Ascending aorta (tissue), 2 donors: ENCODE measurements at regions of chr2 and their contacts with region 1.

Region 1: DNA sequence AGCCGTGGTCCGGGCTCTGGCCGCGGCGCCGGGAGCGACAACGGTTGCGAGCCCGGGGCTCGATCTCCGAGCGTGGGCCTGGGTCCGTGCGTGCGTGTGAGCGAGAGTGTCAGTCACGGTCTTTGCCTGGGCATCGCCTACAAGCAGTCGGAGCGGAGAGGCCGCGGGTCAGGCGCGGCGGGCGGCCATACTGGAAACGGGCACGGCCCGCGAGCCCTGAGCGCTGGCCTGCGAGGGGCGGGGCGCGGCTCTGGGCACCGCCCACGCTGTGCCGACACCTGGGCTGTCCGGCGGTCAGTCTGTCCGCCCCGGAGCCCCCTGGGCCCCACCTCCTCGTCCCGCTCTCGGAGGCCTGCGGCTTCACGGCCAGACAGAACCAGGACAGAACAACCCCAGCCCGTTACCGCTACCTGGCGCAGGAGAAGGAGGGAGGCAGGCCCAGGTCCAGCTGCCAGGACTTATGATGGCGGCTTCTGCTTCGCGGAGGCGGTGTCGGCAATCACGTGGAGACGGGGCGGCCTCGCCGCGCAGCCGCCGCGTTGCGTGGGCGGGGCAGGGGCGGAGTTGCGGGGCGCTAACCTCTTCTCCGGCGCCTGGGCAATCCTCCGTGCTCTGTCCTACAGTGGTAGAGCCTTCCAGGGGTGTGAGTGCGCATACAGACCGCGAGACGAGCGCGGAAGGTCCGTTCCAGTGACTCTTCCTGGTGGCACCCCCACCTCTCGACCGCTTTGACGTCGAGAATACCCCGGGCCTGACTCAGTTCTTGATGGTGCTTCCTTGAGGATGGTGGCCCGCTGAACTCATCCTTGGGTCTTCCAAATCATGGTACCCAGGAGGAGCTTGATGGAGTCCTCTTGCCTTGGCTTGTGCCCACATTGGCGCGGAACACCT is at the start of gene TMEM131:
- DNase-seq: peak; percentile 58 to 94
- H3K4me3 ChIP-seq: peak within 1 kb of the TSS; percentile 68 to 91
- H3K27ac ChIP-seq: peak within 1 kb of the TSS; percentile 94 to 97
- H3K4me1 ChIP-seq: peaks cover 0 to 17% of the 10 kb centered on the region in 2 donors
- H3K27me3 ChIP-seq: no peaks in the 10 kb centered on the region
- CTCF ChIP-seq: no peak
- total RNA-seq, gene TMEM131: 20.0 TPM

Region 2: GRCh38 chr2:97645695-97646629 is 350.0 kb before region 1 on chr2 and contains the start of gene COX5B:
- intact Hi-C with region 1: loop called (anchors 5 kb)
- DNase-seq: peak; percentile 96 to 99
- H3K4me3 ChIP-seq: peak within 1 kb of the TSS; percentile 87 to 92
- H3K27ac ChIP-seq: peak within 1 kb of the TSS; percentile 96 to 98
- H3K4me1 ChIP-seq: peaks cover 3 to 9% of the 10 kb centered on the region in 2 donors
- H3K27me3 ChIP-seq: no peaks in the 10 kb centered on the region
- CTCF ChIP-seq: no peak
- total RNA-seq, gene COX5B: 251 TPM

Region 3: GRCh38 chr2:97806738-97807618 is 189.0 kb before region 1 on chr2:
- intact Hi-C with region 1: loop called (anchors 2 kb)
- DNase-seq: peak; percentile 27 to 89
- H3K4me3 ChIP-seq: no peak overlapping the region
- H3K27ac ChIP-seq: peak overlapping the region in 1 of 2 donors; percentile 3
- H3K4me1 ChIP-seq: no peaks in the 10 kb centered on the region
- H3K27me3 ChIP-seq: no peaks in the 10 kb centered on the region
- CTCF ChIP-seq: peak; percentile 83 to 90 (median 89)

Region 4: GRCh38 chr2:98149333-98149697 is 153.3 kb after region 1 on chr2:
- intact Hi-C with region 1: loop called (anchors 5 kb)
- DNase-seq: peak in 1 of 2 donors; percentile 82
- H3K4me3 ChIP-seq: peak overlapping the region; percentile 43 to 57
- H3K27ac ChIP-seq: peak overlapping the region; percentile 61 to 66
- H3K4me1 ChIP-seq: peaks cover 0 to 9% of the 10 kb centered on the region in 2 donors
- H3K27me3 ChIP-seq: no peaks in the 10 kb centered on the region
- CTCF ChIP-seq: no peak

Region 5: DNA sequence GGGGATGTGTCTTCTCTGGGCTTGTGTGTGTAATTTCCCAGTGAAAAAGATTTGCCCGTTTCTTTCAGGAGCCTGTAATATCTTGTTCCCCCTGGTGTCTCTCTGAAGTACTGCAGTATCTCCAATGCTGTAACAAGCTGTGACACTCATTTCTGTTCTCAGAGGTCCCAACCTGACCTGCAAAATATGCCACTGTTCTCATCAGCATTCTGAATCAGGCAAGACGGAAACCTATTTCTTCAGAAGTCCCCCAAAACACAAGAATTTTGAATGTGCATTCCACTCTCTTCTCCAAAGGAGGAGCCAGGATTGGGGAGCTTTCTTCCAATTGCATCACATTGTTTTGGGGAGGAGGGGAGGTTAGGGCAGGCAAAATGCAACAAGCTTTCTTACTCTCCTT is 273.3 kb after region 1 on chr2:
- intact Hi-C with region 1: loop called (anchors 5 kb)
- DNase-seq: no peak
- H3K4me3 ChIP-seq: no peak overlapping the region
- H3K27ac ChIP-seq: peak overlapping the region; percentile 62 to 65
- H3K4me1 ChIP-seq: peaks cover 0 to 4% of the 10 kb centered on the region in 2 donors
- H3K27me3 ChIP-seq: no peaks in the 10 kb centered on the region
- CTCF ChIP-seq: peak; percentile 39 to 74 (median 63)